ENCODE measurements at regions of chr1 and their contacts with region 1.

Region 1: GRCh38 chr1:161165742-161166668 is at the start of gene PPOX:
- DNase-seq: peak; percentile 96
- H3K4me3 Mint-ChIP-seq: peak within 1 kb of the TSS; percentile 88
- H3K27ac Mint-ChIP-seq: peak within 1 kb of the TSS; percentile 94
- H3K4me1 Mint-ChIP-seq: peaks cover 49% of the 10 kb centered on the region
- H3K27me3 Mint-ChIP-seq: no peaks in the 10 kb centered on the region
- total RNA-seq, gene PPOX: 32.9 to 33.2 TPM

Region 2: DNA sequence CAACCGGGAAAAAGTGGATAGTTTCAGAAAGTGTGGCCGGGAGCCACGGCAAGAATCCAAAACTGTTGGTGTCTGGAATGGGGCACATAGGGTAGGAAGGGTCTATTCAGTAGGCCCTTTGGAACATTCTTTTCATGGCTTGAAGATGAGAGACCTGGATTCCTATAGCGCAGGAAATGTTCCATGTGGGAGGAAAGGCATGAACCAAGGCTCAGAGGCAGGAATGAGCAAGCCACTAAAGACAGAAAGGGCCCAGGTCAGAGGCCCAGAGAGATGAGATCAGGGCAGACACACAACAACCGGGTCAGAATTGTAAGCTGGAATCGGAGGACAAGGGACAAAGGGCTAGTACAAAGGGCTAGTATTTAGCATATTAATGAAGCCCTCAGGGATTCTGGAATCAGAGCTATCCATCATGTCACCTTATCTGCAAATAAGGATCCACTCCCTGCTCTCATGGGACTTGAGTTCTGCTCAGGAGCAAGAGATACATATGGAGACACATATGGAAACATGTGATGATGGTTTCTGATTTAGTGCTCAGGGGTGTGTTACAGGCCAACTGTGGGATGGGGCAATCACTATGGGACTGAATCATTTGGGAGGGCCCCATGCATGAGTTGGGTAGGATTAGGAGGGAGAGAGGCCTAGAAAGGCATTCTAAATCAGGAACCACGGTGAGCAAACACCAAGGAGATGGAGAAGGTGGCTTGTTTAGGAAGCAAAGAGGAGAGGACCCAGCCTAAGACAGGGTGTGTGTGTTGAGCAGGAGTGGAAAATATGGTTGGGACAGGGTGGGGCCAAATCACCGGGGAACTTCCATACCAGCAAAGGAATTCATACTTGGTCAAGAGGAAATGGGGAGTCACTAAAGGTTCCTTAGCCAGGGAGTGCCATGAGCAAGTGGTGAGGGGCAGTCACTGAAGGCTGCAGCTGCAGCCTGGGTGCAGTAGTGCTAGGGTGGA is 85.3 kb before region 1 on chr1:
- CTCF ChIA-PET with region 1: no interaction called
- POLR2A ChIA-PET with region 1: no interaction called
- DNase-seq: no peak
- H3K4me3 Mint-ChIP-seq: no peak overlapping the region
- H3K27ac Mint-ChIP-seq: no peak overlapping the region
- H3K4me1 Mint-ChIP-seq: peaks cover 13% of the 10 kb centered on the region
- H3K27me3 Mint-ChIP-seq: peaks cover 2% of the 10 kb centered on the region

Region 3: DNA sequence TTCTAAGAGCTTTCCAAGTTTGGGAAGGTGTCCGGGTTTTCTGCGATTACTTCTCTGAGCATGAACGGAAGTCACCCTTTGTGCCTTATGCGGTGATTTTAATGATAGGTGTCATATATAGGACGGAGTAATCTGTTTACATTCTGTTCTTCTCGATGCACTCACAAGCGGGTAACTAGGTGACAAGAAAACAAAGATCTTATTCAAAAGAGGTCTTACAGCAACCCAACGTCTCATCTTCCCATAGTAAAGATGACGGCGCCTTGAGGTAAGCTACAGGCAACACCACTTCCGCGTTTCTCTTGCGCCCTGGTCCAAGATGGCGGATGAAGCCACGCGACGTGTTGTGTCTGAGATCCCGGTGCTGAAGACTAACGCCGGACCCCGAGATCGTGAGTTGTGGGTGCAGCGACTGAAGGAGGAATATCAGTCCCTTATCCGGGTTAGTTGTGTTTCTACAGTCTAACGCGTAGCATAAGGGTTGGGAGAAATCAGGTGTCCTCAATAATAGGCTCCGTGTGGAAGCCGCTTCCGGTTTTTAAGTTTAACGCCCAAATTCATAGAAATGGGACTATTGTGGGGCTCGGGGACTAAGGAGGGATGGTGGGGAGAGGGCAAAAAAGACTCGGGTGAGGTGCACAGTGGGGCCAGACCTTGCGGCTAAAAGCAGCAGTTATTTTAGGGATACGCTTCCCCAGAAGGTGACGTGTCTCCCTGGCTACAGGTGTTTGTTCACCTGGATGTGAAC is 12.2 kb before region 1 on chr1 and contains the start of gene UFC1:
- CTCF ChIA-PET with region 1: interaction called, 36 read pairs
- POLR2A ChIA-PET with region 1: interaction called, 63 read pairs
- DNase-seq: peak; percentile 85
- H3K4me3 Mint-ChIP-seq: peak within 1 kb of the TSS; percentile 92
- H3K27ac Mint-ChIP-seq: peak within 1 kb of the TSS; percentile 98
- H3K4me1 Mint-ChIP-seq: peaks cover 30% of the 10 kb centered on the region
- H3K27me3 Mint-ChIP-seq: no peaks in the 10 kb centered on the region
- total RNA-seq, gene UFC1: 103 to 113 TPM

Region 4: GRCh38 chr1:161185282-161185682 is 19.3 kb after region 1 on chr1:
- CTCF ChIA-PET with region 1: interaction called, 69 read pairs
- POLR2A ChIA-PET with region 1: interaction called, 51 read pairs
- DNase-seq: peak; percentile 88
- H3K4me3 Mint-ChIP-seq: peak overlapping the region; percentile 71
- H3K27ac Mint-ChIP-seq: peak overlapping the region; percentile 93
- H3K4me1 Mint-ChIP-seq: peaks cover 79% of the 10 kb centered on the region
- H3K27me3 Mint-ChIP-seq: no peaks in the 10 kb centered on the region

Region 5: DNA sequence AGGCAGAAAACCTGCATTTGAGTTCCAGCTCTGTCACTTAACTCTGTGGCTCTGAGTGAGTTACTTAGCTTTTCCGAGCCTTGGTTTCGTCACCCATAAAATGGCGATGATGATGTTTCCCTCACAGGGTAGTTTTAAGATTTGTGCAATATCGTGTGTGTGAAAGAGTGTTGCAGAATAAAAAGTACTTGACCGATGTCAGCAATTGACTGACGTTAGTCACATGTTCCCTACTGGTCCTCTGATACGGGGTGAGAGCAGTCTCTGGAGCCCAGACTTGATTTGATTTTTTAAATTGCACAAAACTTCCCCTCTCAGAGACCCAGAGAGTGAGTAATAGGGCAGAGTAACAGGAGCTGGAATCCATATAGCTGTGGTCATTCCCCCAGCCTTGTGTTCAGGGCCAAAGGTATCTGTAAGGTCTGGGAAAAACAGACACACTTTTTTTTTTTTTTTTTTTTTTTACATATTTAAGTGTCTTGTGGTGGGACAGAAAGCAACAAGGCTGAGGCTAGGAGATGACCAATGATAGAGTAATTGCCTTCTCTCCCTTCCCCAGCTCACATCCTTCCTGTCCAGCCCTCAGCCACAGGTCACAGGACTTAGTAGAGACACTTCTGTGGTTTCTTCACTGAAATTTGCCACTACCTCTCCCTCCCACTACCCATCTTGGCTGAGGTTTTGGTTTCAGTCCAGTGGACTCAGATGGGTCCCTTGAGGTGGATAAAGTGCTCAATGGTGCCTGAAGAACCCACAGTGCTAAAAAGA is 51.1 kb after region 1 on chr1:
- CTCF ChIA-PET with region 1: interaction called, 16 read pairs
- POLR2A ChIA-PET with region 1: no interaction called
- DNase-seq: no peak
- H3K4me3 Mint-ChIP-seq: no peak overlapping the region
- H3K27ac Mint-ChIP-seq: peak overlapping the region; percentile 7
- H3K4me1 Mint-ChIP-seq: peaks cover 43% of the 10 kb centered on the region
- H3K27me3 Mint-ChIP-seq: no peaks in the 10 kb centered on the region

Region 6: DNA sequence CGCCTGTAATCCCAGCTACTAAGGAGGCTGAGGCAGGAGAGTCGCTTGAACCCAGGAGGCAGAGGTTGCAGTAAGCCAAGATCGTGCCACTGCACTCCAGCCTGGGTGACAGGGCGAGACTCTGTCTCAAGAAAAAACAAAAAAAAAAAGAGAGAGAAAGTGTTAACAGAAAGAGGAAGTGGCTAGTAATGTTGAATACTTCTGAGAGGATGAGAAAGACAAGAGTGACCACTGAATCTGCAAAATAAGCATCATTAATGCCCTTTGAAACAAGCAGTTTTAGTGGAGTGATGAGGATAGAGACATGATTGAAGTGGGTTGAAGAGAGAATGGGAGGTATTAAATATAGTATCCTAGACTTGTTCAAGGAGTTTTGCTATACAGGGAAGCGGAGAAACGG is 132.1 kb after region 1 on chr1:
- CTCF ChIA-PET with region 1: no interaction called
- POLR2A ChIA-PET with region 1: no interaction called
- DNase-seq: no peak
- H3K4me3 Mint-ChIP-seq: no peak overlapping the region
- H3K27ac Mint-ChIP-seq: no peak overlapping the region
- H3K4me1 Mint-ChIP-seq: peaks cover 5% of the 10 kb centered on the region
- H3K27me3 Mint-ChIP-seq: no peaks in the 10 kb centered on the region

Measured in activated CD4-positive, alpha-beta memory T cell treated with anti-CD3 and anti-CD28 coated beads, Interleukin-2, amount 10 ng/mL, durations not matched to agents 7 days and 5 days (primary cell).